ENCODE measurements at regions of chr3 and their contacts with region 1.

Region 1: DNA sequence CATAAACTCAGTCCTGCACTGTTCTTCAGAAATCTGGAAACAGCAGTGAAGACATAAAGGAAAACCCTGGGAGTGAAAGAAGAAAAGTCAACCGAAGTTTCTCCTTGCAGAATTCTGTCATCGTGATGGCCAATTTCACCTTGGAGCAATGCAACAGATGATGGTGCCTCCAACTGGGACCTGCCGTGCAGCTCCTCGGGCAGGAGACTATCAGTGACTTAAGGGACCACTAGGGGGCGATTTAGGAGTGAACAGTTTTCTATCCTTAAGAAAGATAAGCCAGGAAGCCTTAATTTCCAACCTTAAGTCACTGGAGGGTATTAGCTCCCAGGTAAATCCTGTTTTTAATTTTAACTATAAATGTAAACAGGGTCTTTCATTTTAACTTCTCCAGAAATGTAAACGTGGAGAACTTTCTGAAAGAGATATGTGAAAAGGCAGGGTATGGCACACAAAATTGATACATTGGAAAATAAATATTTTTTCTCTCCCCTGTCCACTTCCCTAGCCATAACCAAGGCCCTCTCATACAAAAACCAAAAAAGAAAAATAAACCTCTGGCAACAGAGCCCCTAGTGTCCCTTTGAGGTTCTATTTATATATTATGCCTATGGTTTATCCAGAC is 116.3 kb downstream of the PDZRN3 start:
- DNase-seq: peak; percentile 13 to 87 (median 60)

Region 2: GRCh38 chr3:73624821-73625665 is 116.6 kb after region 1 on chr3 and contains the start of gene PDZRN3:
- intact Hi-C with region 1: loop called (anchors 10 kb)
- DNase-seq: peak in 32 of 42 donors; percentile 4 to 62 (median 34)

Region 3: DNA sequence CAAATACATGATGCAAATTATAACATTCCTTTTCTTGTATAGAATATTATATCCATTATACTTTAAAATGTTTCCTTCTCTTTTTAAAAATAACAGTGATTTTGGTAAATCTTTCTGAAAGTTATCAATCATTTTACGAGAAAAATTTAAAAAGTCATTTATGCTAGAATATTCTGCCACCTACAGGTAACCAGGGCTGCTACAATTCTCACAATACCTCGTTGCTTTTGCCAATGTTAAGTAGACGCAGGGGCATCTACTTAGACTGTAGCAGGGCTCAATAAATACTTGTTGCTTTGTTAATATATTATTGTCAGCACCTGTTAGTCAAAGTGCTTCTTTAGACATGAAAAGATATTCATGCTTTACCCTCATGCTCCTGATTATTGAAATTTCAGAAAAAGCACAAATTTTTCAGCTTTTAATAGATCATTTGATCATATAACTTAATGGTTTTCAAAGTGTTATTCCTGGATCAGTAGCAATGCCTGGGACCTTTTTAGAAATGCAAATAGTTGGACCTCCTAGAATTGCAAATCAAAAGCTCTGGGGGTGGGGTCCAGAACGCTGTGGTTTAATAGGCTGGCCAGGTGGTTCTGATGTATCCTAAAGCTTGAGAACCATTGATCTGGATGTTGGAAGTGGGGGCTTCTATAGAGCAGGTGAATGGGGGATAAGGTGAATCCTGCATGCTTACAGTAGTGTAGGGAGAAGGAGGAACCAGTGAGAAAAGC is 339.9 kb after region 1 on chr3:
- intact Hi-C with region 1: loop called (anchors 5 kb)
- DNase-seq: peak in 7 of 42 donors; percentile 4 to 49 (median 17)